ENCODE measurements at regions of chr1 and their contacts with region 1.

Region 1: GRCh38 chr1:8910914-8911313 is 32.4 kb upstream of the ENO1 start:
- DNase-seq: no peak
- H3K4me3 ChIP-seq: no peak overlapping the region
- H3K27ac ChIP-seq: no peak overlapping the region
- H3K4me1 ChIP-seq: no peaks in the 10 kb centered on the region
- H3K27me3 ChIP-seq: no peaks in the 10 kb centered on the region
- CTCF ChIP-seq: no peak
- EP300 ChIP-seq: no peak
- POLR2A ChIP-seq: no peak

Region 2: GRCh38 chr1:9110669-9111356 is 199.9 kb after region 1 on chr1:
- intact Hi-C with region 1: loop called in 1 of 4 experiments (anchors 5 kb)
- DNase-seq: peak; percentile 92 to 97 (median 95)
- H3K4me3 ChIP-seq: no peak overlapping the region
- H3K27ac ChIP-seq: no peak overlapping the region
- H3K4me1 ChIP-seq: peaks cover 2% of the 10 kb centered on the region
- H3K27me3 ChIP-seq: no peaks in the 10 kb centered on the region
- CTCF ChIP-seq: peak; percentile 84 to 97 (median 92)
- EP300 ChIP-seq: no peak
- POLR2A ChIP-seq: peak; percentile 12

Measured in ovary (tissue), 10 donors.